ENCODE measurements at regions of chr13 and their contacts with region 1.

Region 1: DNA sequence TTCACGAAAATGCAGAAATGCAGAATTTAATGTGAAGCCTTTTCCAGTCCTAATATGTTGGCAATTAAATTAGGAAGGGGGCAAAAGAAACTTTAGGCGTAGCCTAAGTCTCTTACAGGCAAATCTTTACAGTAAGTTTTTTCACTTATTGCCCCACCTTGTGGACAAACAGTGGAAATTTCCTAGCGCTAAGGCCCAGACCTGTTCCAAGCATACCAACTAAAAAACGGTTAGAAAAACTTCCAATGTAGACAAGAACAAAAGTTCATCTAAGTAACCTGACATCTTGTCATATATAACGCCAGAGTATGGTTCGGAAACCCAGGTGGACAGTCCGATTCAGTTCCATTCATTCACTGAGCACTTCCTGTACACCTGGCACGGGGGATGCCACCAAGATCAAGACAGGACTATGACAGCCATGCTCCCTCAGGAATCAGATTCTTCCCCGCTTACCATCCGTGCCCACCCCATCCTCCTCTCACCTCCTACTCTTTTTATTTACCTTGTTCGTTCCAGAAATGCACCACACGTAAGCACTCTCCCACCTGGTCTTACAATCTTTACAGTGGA is 4.9 kb downstream of the ZAR1L start:
- DNase-seq: no peak
- H3K4me3 ChIP-seq: peak overlapping the region; percentile 34 to 47 (median 40)
- H3K27ac ChIP-seq: peak overlapping the region; percentile 60 to 73 (median 66)
- H3K4me1 ChIP-seq: peaks cover 6 to 23% (median 21%) of the 10 kb centered on the region in 4 donors
- H3K27me3 ChIP-seq: no peaks in the 10 kb centered on the region
- CTCF ChIP-seq: peak; percentile 82 to 87 (median 82)
- EP300 ChIP-seq: no peak
- POLR2A ChIP-seq: no peak

Region 2: GRCh38 chr13:31909864-31910551 is 400.2 kb before region 1 on chr13:
- intact Hi-C with region 1: loop called (anchors 5 kb)
- DNase-seq: no peak
- H3K4me3 ChIP-seq: no peak overlapping the region
- H3K27ac ChIP-seq: no peak overlapping the region
- H3K4me1 ChIP-seq: peaks cover 4 to 24% (median 18%) of the 10 kb centered on the region in 4 donors
- H3K27me3 ChIP-seq: no peaks in the 10 kb centered on the region
- CTCF ChIP-seq: peak; percentile 83 to 87 (median 84)
- EP300 ChIP-seq: no peak
- POLR2A ChIP-seq: no peak

Region 3: GRCh38 chr13:32019612-32020233 is 290.5 kb before region 1 on chr13:
- intact Hi-C with region 1: loop called (anchors 2 kb)
- DNase-seq: no peak
- H3K4me3 ChIP-seq: no peak overlapping the region
- H3K27ac ChIP-seq: no peak overlapping the region
- H3K4me1 ChIP-seq: peaks cover 13 to 18% (median 13%) of the 10 kb centered on the region in 4 donors
- H3K27me3 ChIP-seq: no peaks in the 10 kb centered on the region
- CTCF ChIP-seq: peak; percentile 65 to 80 (median 73)
- EP300 ChIP-seq: no peak
- POLR2A ChIP-seq: no peak

Region 4: DNA sequence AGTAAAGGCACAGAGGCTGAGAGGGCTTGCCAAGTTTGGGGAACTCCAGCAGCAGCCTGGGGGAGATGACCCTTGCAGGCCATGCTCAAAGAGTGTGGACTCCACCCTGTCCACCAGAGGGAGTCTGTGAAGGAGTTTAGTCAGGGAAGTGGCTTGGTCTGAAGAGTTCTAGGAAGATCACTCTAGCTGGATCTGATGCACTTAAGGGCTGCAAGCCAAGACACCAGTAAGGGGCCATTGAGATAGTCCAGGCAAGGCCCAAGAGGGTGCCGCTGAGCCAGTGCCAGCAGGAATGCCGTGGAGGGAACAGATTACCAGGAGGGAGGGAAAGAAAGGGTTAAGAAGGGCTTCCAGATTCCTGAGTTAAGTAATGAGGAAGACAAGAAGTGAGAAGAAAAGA is 63.8 kb before region 1 on chr13:
- intact Hi-C with region 1: loop called (anchors 5 kb)
- DNase-seq: no peak
- H3K4me3 ChIP-seq: no peak overlapping the region
- H3K27ac ChIP-seq: peak overlapping the region in 3 of 4 donors; percentile 44 to 54 (median 45)
- H3K4me1 ChIP-seq: peaks cover 13 to 29% (median 19%) of the 10 kb centered on the region in 4 donors
- H3K27me3 ChIP-seq: no peaks in the 10 kb centered on the region
- CTCF ChIP-seq: peak; percentile 62 to 78 (median 68)
- EP300 ChIP-seq: no peak
- POLR2A ChIP-seq: no peak